Caco-2 (cell line): ENCODE measurements at regions of chrX and their contacts with region 1.

Region 1: GRCh38 chrX:40298572-40299479 is 201.1 kb upstream of the BCOR start:
- DNase-seq: peak; percentile 30 to 44
- H3K4me3 ChIP-seq: peak overlapping the region; percentile 8; the same call in 1 of the 2 replicates
- H3K4me3 Mint-ChIP-seq: peak overlapping the region; percentile 67
- H3K27ac Mint-ChIP-seq: peak overlapping the region; percentile 82
- H3K4me1 ChIP-seq: peaks cover 41% of the 10 kb centered on the region
- H3K4me1 Mint-ChIP-seq: peaks cover 21% of the 10 kb centered on the region
- H3K27me3 ChIP-seq: no peaks in the 10 kb centered on the region
- H3K27me3 Mint-ChIP-seq: no peaks in the 10 kb centered on the region
- CTCF ChIP-seq: peak; percentile 19 to 39

Region 2: DNA sequence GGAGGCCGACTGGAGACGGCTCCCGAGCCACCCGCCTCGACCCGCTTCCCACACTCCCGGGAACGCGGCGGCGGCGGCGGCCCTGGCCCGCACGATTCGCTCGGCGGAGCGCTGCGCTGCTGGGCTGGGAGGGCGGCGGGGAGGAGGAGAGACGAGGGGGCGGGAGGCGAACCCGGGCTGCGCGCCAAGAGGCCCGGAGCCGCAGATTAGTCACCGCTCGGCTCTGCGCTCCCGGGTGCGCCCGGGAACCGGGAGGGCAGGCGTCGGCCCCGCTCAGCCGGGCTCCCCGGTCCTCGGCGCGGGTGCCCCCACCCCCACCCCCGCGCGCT is 189.9 kb before region 1 on chrX:
- CTCF ChIA-PET with region 1: no interaction called
- POLR2A ChIA-PET with region 1: no interaction called
- intact Hi-C with region 1: no loop called
- DNase-seq: peak in 1 of 2 experiments; percentile 61
- H3K4me3 ChIP-seq: peak overlapping the region; percentile 66
- H3K4me3 Mint-ChIP-seq: peak overlapping the region; percentile 76
- H3K27ac Mint-ChIP-seq: no peak overlapping the region
- H3K4me1 ChIP-seq: peaks cover 2% of the 10 kb centered on the region; the same call in 1 of the 2 replicates
- H3K4me1 Mint-ChIP-seq: peaks cover 6% of the 10 kb centered on the region
- H3K27me3 ChIP-seq: no peaks in the 10 kb centered on the region
- H3K27me3 Mint-ChIP-seq: no peaks in the 10 kb centered on the region
- CTCF ChIP-seq: no peak

Region 3: DNA sequence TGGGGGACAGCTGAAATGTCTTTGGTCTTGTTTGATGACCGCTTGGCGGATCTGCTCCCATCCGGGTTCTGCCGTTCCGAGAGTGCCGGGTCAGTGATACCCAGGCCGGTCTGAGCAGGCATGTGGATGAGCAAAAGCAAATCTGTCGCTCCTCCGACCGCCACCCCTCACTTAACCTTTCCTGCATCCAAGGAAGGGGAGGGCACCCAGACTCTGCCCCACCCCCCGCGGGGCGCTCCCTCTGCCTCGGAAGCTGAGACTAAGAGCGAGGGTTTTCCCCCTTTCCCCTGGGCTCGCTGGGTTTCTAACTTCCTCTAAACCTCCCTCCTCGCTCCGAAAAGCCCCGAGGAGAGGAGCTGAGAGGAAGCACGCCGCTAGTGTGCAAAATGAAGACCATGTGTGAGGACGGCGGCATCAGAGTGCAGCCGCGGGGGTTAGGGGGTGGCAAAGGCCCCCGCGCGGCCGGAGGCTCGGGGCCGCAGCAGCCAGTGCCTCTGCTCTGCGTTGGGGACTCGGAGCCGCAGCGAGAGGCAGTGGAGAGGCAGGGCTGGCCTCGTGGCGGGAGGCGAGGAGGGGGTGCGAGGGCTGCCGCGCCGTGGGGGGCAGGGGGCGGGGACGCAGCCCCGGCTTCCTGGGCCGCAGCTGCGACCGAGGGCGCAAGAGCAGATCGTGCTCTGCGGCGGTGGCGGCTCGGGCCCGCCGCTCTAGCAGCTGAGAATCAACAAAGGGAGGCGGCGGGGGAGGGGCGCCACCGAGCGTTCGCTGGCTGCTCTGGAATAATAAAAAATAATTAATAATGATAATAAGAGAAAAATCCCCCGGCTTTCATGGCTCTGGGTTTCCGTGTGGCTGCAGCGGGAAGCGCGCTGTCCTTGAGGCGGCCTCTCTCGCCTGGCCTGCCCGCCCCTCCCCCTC is 145.2 kb before region 1 on chrX:
- CTCF ChIA-PET with region 1: no interaction called
- POLR2A ChIA-PET with region 1: interaction called, 12 read pairs
- intact Hi-C with region 1: no loop called
- DNase-seq: peak in 1 of 2 experiments; percentile 40
- H3K4me3 ChIP-seq: peak overlapping the region; percentile 41
- H3K4me3 Mint-ChIP-seq: peak overlapping the region; percentile 79
- H3K27ac Mint-ChIP-seq: no peak overlapping the region
- H3K4me1 ChIP-seq: 0 out of 2 replicates have a peak, but pooled peaks cover 6% of the 10 kb centered on the region
- H3K4me1 Mint-ChIP-seq: no peaks in the 10 kb centered on the region
- H3K27me3 ChIP-seq: no peaks in the 10 kb centered on the region
- H3K27me3 Mint-ChIP-seq: no peaks in the 10 kb centered on the region
- CTCF ChIP-seq: no peak

Region 4: DNA sequence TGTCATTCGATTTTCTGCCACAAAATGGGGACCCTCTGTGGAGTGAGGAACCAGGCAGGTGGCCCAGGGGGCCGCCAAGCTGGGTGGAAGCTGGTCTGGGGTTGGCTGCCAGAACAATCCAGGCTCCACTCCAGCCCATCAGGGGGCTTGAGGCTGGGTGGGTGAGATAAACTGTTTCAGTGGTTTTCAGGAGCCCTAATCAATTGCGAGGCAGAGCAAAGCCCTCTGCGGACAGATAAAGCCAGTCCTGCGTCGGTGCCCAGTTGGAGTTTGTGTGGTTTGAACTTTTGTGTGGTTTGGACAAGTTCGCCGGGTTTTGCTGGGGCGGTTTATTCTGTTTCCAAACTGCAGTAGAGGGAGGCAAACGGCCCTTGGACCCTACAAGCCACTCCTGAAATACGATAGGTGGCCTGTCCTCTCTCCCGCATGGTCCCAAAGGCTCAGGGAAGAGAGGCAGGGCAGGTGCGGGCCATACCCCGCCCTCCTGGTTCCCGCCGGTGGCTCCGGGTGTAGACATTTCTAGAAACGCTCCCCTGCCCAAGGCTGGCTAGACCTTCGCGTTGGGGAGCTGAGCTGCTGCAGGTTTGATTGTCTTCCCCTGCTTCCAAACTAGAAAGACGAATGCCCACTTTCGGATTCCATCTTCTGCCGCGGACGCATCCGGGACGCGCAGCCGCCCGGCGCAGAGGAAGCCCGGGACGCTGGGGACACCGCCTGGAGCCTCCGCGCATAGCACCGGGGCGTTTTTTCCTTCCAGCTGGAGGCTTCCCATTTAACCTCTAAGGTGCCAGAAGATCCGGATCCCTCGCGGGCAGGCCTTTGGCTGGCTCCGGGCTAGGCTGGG is 32.1 kb before region 1 on chrX:
- CTCF ChIA-PET with region 1: no interaction called
- POLR2A ChIA-PET with region 1: interaction called, 4 read pairs
- intact Hi-C with region 1: loop called (anchors 1 kb)
- DNase-seq: peak; percentile 64 to 76
- H3K4me3 ChIP-seq: peak overlapping the region; percentile 52
- H3K4me3 Mint-ChIP-seq: peak overlapping the region; percentile 63
- H3K27ac Mint-ChIP-seq: peak overlapping the region; percentile 34
- H3K4me1 ChIP-seq: peaks cover 16% of the 10 kb centered on the region; the same call in 1 of the 2 replicates
- H3K4me1 Mint-ChIP-seq: no peaks in the 10 kb centered on the region
- H3K27me3 ChIP-seq: no peaks in the 10 kb centered on the region
- H3K27me3 Mint-ChIP-seq: no peaks in the 10 kb centered on the region
- CTCF ChIP-seq: peak; percentile 49 to 67

Region 5: DNA sequence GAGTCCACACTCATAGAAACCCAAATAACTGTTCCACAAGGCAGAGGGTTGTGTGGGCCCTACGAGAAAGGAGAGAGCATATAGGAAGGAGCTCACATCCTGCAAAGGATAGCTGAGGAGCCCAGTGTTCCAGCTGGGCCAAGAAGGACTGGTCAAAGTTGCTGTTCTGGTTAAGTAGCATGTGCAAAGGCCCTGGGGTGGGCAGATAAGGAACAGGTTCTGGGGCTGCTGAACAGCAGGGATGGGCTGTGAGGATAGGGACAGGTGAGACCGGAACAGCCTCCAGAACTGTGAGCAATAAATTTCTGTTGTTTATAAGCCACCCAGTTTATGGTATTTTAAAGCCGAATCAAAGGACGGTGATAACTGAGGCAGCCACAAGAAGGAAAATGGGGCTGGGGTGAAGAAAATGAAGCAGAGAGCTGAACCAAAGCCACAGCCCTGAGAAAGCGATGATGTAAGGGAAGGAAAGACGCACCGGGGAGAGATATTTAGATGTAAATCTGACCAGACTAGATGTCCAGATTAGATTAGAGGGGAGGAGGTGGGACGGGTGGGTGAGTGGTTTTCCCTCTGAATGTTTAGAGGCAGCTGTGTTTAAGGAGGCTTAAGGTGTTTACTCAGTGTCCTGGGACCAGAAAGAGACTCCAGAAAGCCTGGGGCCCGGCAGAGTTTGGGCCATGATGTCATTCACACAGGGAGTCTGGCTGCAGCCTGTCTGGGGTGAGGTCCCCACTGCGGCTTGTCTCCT is 20.3 kb before region 1 on chrX:
- CTCF ChIA-PET with region 1: no interaction called
- POLR2A ChIA-PET with region 1: no interaction called
- intact Hi-C with region 1: loop called (anchors 2 kb)
- DNase-seq: peak; percentile 75 to 77
- H3K4me3 ChIP-seq: no peak overlapping the region
- H3K4me3 Mint-ChIP-seq: no peak overlapping the region
- H3K27ac Mint-ChIP-seq: peak overlapping the region; percentile 83
- H3K4me1 ChIP-seq: peaks cover 14% of the 10 kb centered on the region
- H3K4me1 Mint-ChIP-seq: peaks cover 6% of the 10 kb centered on the region
- H3K27me3 ChIP-seq: no peaks in the 10 kb centered on the region
- H3K27me3 Mint-ChIP-seq: no peaks in the 10 kb centered on the region
- CTCF ChIP-seq: no peak